ENCODE measurements at regions of chr12 and their contacts with region 1.

Region 1: GRCh38 chr12:31759632-31760459 is 31.0 kb upstream of the AMN1 start:
- DNase-seq: no peak
- H3K4me3 Mint-ChIP-seq: no peak overlapping the region
- H3K27ac Mint-ChIP-seq: no peak overlapping the region
- H3K4me1 Mint-ChIP-seq: peaks cover 17% of the 10 kb centered on the region
- H3K27me3 Mint-ChIP-seq: no peaks in the 10 kb centered on the region

Region 2: GRCh38 chr12:31797230-31797872 is 37.5 kb after region 1 on chr12:
- CTCF ChIA-PET with region 1: no interaction called
- intact Hi-C with region 1: loop called (anchors 5 kb)
- DNase-seq: peak; percentile 55
- H3K4me3 Mint-ChIP-seq: peak overlapping the region; percentile 16
- H3K27ac Mint-ChIP-seq: peak overlapping the region; percentile 85
- H3K4me1 Mint-ChIP-seq: peaks cover 25% of the 10 kb centered on the region
- H3K27me3 Mint-ChIP-seq: no peaks in the 10 kb centered on the region

Region 3: GRCh38 chr12:31951008-31951407 is 191.2 kb after region 1 on chr12:
- CTCF ChIA-PET with region 1: no interaction called
- intact Hi-C with region 1: loop called (anchors 1 kb)
- DNase-seq: peak; percentile 63
- H3K4me3 Mint-ChIP-seq: no peak overlapping the region
- H3K27ac Mint-ChIP-seq: peak overlapping the region; percentile 68
- H3K4me1 Mint-ChIP-seq: peaks cover 39% of the 10 kb centered on the region
- H3K27me3 Mint-ChIP-seq: no peaks in the 10 kb centered on the region

Measured in activated naive CD4-positive, alpha-beta T cell treated with anti-CD3 and anti-CD28 coated beads for 36 hours (primary cell).